ENCODE measurements at regions of chr18 and their contacts with region 1.

Region 1: GRCh38 chr18:12657684-12658425 is at the start of gene SPIRE1:
- DNase-seq: peak; percentile 73 to 79
- ATAC-seq: peak; percentile 83 to 94 (median 88)
- H3K4me3 ChIP-seq: peak within 1 kb of the TSS; percentile 67 to 89 (median 82)
- H3K27ac ChIP-seq: peak within 1 kb of the TSS; percentile 73 to 98 (median 95)
- H3K4me1 ChIP-seq: peaks cover 1 to 42% (median 26%) of the 10 kb centered on the region in 9 donors
- H3K27me3 ChIP-seq: no peaks in the 10 kb centered on the region
- CTCF ChIP-seq: peak in 3 of 9 donors; percentile 25 to 43 (median 28)
- total RNA-seq, gene SPIRE1: 35.5 to 65.3 (median 48.9) TPM

Region 2: GRCh38 chr18:12391618-12392165 is 266.2 kb before region 1 on chr18:
- intact Hi-C with region 1: loop called (anchors 1 to 5 kb)
- DNase-seq: peak; percentile 29 to 58
- ATAC-seq: peak; percentile 77 to 95 (median 93)
- H3K4me3 ChIP-seq: no peak overlapping the region
- H3K27ac ChIP-seq: no peak overlapping the region
- H3K4me1 ChIP-seq: peaks cover 0 to 3% (median 0%) of the 10 kb centered on the region in 9 donors
- H3K27me3 ChIP-seq: no peaks in the 10 kb centered on the region
- CTCF ChIP-seq: peak; percentile 78 to 95 (median 91)

Region 3: GRCh38 chr18:12408247-12408869 is 249.5 kb before region 1 on chr18:
- intact Hi-C with region 1: loop called in 4 of 10 experiments (anchors 5 kb)
- DNase-seq: no peak
- ATAC-seq: peak in 1 of 8 donors; percentile 7
- H3K4me3 ChIP-seq: peak overlapping the region; percentile 30 to 71 (median 62)
- H3K27ac ChIP-seq: peak overlapping the region; percentile 49 to 88 (median 82)
- H3K4me1 ChIP-seq: peaks cover 0 to 23% (median 15%) of the 10 kb centered on the region in 9 donors
- H3K27me3 ChIP-seq: peaks cover 0 to 32% (median 10%) of the 10 kb centered on the region in 7 donors
- CTCF ChIP-seq: no peak

Region 4: DNA sequence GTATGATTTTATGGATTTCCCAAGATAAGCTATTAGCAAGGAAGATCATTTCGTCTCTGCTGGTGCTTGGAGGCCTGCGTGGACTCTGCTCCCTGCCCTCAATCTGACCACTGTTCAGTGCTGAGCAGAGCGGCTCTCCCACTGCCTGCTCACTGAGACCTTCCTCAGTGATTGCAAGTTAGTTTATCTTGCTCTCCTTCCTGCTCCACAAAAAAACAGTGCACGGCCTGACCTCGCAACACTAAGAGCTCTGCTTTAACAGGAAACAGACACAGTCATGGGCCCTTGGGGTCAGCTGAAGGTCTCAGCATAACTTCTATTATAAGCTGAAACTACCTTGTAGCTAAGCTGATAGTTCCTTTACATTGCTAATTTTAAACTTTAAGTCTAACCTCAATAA is 197.0 kb before region 1 on chr18:
- intact Hi-C with region 1: loop called in 1 of 10 experiments (anchors 5 kb)
- DNase-seq: peak in 1 of 2 donors; percentile 42
- ATAC-seq: peak; percentile 75 to 91 (median 81)
- H3K4me3 ChIP-seq: no peak overlapping the region
- H3K27ac ChIP-seq: peak overlapping the region in 9 of 10 donors; percentile 1 to 73 (median 45)
- H3K4me1 ChIP-seq: peaks cover 0 to 14% (median 9%) of the 10 kb centered on the region in 9 donors
- H3K27me3 ChIP-seq: no peaks in the 10 kb centered on the region
- CTCF ChIP-seq: no peak

Region 5: DNA sequence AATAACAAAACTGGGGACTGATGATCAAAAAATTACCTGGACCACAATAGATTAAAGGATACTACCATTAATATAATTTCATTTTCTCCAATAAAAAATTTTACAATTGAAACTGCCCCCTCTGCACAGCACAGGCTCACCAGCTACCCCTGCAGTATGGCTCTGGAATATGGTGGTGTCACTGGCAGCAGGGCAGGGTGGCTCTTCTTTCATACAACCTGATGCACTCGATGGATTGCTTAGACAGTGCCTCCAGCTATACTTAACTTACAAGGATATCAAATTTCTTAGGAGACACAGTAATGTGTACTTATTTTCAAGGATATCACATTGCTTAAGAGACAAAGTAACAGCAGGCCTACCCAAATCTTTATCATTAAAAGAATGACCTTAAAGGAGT is 126.1 kb before region 1 on chr18:
- intact Hi-C with region 1: loop called in 2 of 10 experiments (anchors 10 kb)
- DNase-seq: no peak
- ATAC-seq: no peak
- H3K4me3 ChIP-seq: no peak overlapping the region
- H3K27ac ChIP-seq: no peak overlapping the region
- H3K4me1 ChIP-seq: no peaks in the 10 kb centered on the region
- H3K27me3 ChIP-seq: no peaks in the 10 kb centered on the region
- CTCF ChIP-seq: no peak

Region 6: DNA sequence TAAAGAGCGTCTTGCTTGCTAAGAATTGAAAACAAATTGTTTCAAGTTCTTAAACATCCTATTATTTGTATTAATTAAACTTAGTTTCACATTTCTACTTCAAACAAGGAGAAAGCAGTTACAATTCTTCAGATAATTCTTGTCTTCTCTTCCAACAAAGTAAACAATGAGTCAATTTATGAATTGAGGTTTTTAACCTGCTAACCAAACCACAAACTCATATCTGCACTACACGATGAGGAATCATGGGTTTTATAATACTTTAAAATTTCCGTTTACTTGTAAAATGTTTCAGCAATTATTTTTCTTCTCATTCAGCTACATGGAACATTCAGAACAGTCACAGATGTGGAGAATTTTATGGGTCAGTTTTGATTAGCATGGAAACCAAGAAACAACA is 114.2 kb before region 1 on chr18:
- intact Hi-C with region 1: loop called in 5 of 10 experiments (anchors 2 to 10 kb)
- DNase-seq: no peak
- ATAC-seq: no peak
- H3K4me3 ChIP-seq: no peak overlapping the region
- H3K27ac ChIP-seq: no peak overlapping the region
- H3K4me1 ChIP-seq: no peaks in the 10 kb centered on the region
- H3K27me3 ChIP-seq: no peaks in the 10 kb centered on the region
- CTCF ChIP-seq: no peak

Measured in heart right ventricle (tissue), 16 donors.